ENCODE measurements at regions of chr3 and their contacts with region 1.

Region 1: GRCh38 chr3:155805802-155806618 is at the start of gene C3orf33:
- DNase-seq: peak; percentile 67
- H3K4me3 Mint-ChIP-seq: peak within 1 kb of the TSS; percentile 74
- H3K27ac Mint-ChIP-seq: peak within 1 kb of the TSS; percentile 71
- H3K4me1 Mint-ChIP-seq: peaks cover 12% of the 10 kb centered on the region
- H3K27me3 Mint-ChIP-seq: peaks cover 13% of the 10 kb centered on the region
- total RNA-seq, gene C3orf33: 0.72 to 1.1 TPM

Region 2: GRCh38 chr3:155481089-155481488 is 324.9 kb before region 1 on chr3:
- CTCF ChIA-PET with region 1: no interaction called
- POLR2A ChIA-PET with region 1: no interaction called
- DNase-seq: no peak
- H3K4me3 Mint-ChIP-seq: no peak overlapping the region
- H3K27ac Mint-ChIP-seq: no peak overlapping the region
- H3K4me1 Mint-ChIP-seq: peaks cover 3% of the 10 kb centered on the region
- H3K27me3 Mint-ChIP-seq: peaks cover 4% of the 10 kb centered on the region

Region 3: GRCh38 chr3:155791190-155791589 is 14.8 kb before region 1 on chr3:
- CTCF ChIA-PET with region 1: interaction called, 19 read pairs
- POLR2A ChIA-PET with region 1: no interaction called
- DNase-seq: no peak
- H3K4me3 Mint-ChIP-seq: no peak overlapping the region
- H3K27ac Mint-ChIP-seq: no peak overlapping the region
- H3K4me1 Mint-ChIP-seq: peaks cover under 1% of the 10 kb centered on the region
- H3K27me3 Mint-ChIP-seq: no peaks in the 10 kb centered on the region

Region 4: GRCh38 chr3:155854141-155854940 is 48.3 kb after region 1 on chr3 and contains the start of gene SLC33A1:
- CTCF ChIA-PET with region 1: interaction called, 12 read pairs
- POLR2A ChIA-PET with region 1: interaction called, 4 read pairs
- DNase-seq: peak; percentile 99
- H3K4me3 Mint-ChIP-seq: peak within 1 kb of the TSS; percentile 88
- H3K27ac Mint-ChIP-seq: peak within 1 kb of the TSS; percentile 100
- H3K4me1 Mint-ChIP-seq: peaks cover 39% of the 10 kb centered on the region
- H3K27me3 Mint-ChIP-seq: peaks cover 6% of the 10 kb centered on the region
- total RNA-seq, gene SLC33A1: 26.7 to 27.9 TPM

Region 5: DNA sequence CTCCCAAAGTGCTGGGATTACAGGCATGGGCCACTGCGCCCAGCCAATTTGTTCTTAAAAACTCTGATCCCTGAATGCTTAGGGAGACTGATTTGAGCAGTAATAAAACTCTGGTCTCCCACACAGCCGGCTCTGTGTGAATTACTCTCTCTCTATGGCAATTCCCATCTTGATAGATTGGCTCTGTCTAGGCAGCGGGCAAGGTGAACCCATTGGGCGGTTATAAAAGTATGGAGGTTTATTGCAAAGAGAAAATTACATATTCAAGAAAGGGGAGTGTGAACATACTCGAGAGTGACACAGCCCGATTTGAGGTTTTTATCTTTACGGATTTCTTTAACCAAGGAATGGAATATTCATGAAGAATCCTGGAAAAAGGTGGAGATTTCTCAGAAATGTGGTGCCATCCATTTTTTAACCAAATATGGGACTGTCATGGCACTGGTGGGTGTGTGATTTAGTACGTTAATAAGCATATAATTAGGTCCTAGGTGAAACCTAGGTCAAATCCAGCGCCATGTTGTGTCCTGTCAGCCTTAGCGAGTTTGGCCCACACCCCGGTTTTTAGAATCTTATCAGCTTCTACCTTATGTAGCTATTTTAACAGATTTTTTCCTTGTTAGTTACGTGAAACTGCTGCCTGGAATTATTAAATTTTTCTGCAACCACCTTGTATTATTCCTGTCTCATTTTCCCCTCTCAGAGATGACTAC is 57.2 kb after region 1 on chr3:
- CTCF ChIA-PET with region 1: interaction called, 12 read pairs
- POLR2A ChIA-PET with region 1: no interaction called
- DNase-seq: no peak
- H3K4me3 Mint-ChIP-seq: no peak overlapping the region
- H3K27ac Mint-ChIP-seq: peak overlapping the region; percentile 86
- H3K4me1 Mint-ChIP-seq: peaks cover 33% of the 10 kb centered on the region
- H3K27me3 Mint-ChIP-seq: no peaks in the 10 kb centered on the region

Region 6: DNA sequence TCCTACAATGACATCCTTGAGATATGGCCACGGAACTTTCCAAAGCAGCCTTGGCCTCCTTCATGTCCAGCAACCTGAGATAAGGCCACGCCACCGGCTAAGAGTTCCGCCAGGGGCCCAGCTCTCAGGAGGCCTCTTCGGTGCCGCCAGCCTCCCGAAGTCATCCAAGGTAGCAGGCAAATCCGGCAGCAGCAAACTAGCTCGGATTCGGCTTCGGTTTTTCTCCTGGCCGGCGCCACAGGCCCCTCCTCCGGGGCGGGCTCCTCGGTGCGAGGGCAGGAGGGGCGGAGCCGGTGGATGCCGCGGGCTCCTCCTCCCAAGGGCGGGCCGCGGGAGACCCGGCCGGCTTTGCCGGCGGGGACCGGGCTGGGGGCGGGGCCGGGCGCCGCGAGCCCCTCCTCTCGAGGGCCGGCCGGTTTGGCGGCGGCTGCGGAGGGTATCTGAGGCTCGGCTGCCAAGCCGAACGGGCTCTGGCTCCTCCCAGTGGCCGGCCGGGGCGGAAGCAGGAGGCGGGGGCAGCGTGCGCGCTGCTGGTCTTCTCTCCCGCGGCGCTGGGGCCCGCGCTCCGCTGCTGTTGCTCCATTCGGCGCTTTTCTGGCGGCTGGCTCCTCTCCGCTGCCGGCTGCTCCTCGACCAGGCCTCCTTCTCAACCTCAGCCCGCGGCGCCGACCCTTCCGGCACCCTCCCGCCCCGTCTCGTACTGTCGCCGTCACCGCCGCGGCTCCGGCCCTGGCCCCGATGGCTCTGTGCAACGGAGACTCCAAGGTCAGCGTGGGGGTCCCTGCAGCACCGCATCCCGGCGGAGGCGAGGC is 64.3 kb after region 1 on chr3 and contains the start of gene GMPS:
- CTCF ChIA-PET with region 1: interaction called, 13 read pairs
- POLR2A ChIA-PET with region 1: interaction called, 4 read pairs
- DNase-seq: peak; percentile 94
- H3K4me3 Mint-ChIP-seq: peak within 1 kb of the TSS; percentile 100
- H3K27ac Mint-ChIP-seq: peak within 1 kb of the TSS; percentile 97
- H3K4me1 Mint-ChIP-seq: peaks cover 31% of the 10 kb centered on the region
- H3K27me3 Mint-ChIP-seq: no peaks in the 10 kb centered on the region
- total RNA-seq, gene GMPS: 92.1 to 99.2 TPM